ENCODE measurements at regions of chr4 and their contacts with region 1.

Region 1: DNA sequence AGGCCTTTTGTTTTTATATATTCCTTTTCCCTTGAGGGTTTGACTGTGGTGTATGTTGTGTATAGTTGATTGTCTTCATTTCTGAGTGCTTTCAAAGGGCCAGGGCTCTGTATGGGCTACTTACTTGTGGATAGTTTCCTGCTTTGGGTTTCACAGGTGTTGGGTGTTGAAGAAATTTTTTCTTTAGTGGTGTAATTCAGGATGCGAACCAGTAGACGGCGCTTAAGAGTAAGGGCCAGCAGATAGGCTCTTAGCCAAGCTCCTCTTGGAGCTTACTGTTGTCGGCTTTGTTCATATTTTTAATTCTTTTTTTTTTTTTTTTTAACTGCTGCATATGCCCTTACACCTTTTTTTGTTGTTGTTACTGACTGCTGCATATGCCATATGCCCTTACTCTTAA is 276.3 kb upstream of the GALNT7 start:
- DNase-seq: peak; percentile 40
- H3K4me3 ChIP-seq: no peak overlapping the region
- H3K27ac ChIP-seq: no peak overlapping the region
- H3K4me1 ChIP-seq: no peaks in the 10 kb centered on the region
- H3K27me3 ChIP-seq: no peaks in the 10 kb centered on the region
- CTCF ChIP-seq: peak; percentile 51 to 72
- POLR2A ChIP-seq: no peak

Region 2: GRCh38 chr4:172142281-172142738 is 750.0 kb before region 1 on chr4:
- CTCF ChIA-PET with region 1: no interaction called
- POLR2A ChIA-PET with region 1: no interaction called
- dilution Hi-C with region 1: no loop called
- intact Hi-C with region 1: no loop called
- DNase-seq: peak; percentile 4
- H3K4me3 ChIP-seq: no peak overlapping the region
- H3K27ac ChIP-seq: no peak overlapping the region
- H3K4me1 ChIP-seq: no peaks in the 10 kb centered on the region
- H3K27me3 ChIP-seq: no peaks in the 10 kb centered on the region
- CTCF ChIP-seq: no peak
- POLR2A ChIP-seq: no peak

Region 3: DNA sequence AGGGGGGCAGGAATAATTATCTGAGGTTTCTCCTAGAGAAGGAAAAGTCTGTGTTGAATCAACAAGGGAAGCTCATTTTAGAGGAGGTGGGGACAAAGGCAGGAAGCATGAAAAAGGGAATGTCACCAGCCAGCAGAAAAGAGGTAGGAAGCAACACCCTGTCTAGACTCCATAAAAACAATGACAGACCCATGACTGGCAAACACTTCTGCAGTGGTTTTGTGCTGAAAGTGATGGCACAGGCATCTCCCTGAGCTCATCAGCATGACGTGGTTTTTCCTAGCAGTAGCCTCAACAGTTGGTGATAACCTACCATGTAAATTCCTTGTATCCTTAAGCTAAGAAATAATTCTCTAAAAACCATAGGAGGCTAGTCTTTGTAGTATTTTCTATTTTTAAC is 165.6 kb after region 1 on chr4:
- CTCF ChIA-PET with region 1: no interaction called
- POLR2A ChIA-PET with region 1: no interaction called
- dilution Hi-C with region 1: no loop called
- intact Hi-C with region 1: no loop called
- DNase-seq: peak; percentile 74
- H3K4me3 ChIP-seq: no peak overlapping the region
- H3K27ac ChIP-seq: peak overlapping the region; percentile 74
- H3K4me1 ChIP-seq: peaks cover 28% of the 10 kb centered on the region
- H3K27me3 ChIP-seq: no peaks in the 10 kb centered on the region
- CTCF ChIP-seq: no peak
- POLR2A ChIP-seq: no peak

Region 4: DNA sequence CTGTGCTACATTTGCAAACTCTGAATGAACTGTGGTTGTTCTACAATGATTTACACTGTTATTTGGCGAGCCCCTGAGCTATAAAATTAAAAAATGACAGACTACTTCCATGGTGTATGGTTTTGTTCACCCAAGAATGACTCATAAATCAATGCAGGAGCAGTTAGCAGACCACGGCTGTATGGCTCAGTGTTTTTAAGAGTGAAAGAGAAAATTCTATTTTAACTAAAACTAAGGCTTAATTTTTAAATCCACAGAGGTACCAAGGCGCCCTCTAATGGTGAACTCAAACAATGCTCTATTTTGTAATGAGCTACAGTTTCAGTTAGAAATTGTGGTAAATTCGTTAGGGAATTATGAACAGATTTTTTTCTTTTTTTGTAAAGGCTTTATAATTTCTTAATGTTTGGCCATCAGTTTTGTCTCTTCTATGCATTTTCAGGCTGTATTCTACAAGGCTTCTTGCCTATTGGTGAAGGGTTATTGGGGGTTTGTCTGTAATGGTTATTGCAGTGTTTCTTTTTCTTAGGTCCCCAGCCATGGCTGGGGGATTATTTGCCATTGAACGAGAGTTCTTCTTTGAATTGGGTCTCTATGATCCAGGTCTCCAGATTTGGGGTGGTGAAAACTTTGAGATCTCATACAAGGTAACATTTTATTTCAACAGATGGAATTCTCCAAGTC is 409.4 kb after region 1 on chr4:
- CTCF ChIA-PET with region 1: interaction called, 6 read pairs
- POLR2A ChIA-PET with region 1: no interaction called
- dilution Hi-C with region 1: no loop called
- intact Hi-C with region 1: loop called (anchors 1 kb)
- DNase-seq: peak; percentile 38
- H3K4me3 ChIP-seq: no peak overlapping the region
- H3K27ac ChIP-seq: no peak overlapping the region
- H3K4me1 ChIP-seq: no peaks in the 10 kb centered on the region
- H3K27me3 ChIP-seq: no peaks in the 10 kb centered on the region
- CTCF ChIP-seq: peak; percentile 52 to 53
- POLR2A ChIP-seq: no peak

Region 5: GRCh38 chr4:174467107-174467506 is 1574.8 kb after region 1 on chr4:
- CTCF ChIA-PET with region 1: no interaction called
- POLR2A ChIA-PET with region 1: no interaction called
- dilution Hi-C with region 1: no loop called
- intact Hi-C with region 1: no loop called
- DNase-seq: no peak
- H3K4me3 ChIP-seq: no peak overlapping the region
- H3K27ac ChIP-seq: no peak overlapping the region
- H3K4me1 ChIP-seq: no peaks in the 10 kb centered on the region
- H3K27me3 ChIP-seq: no peaks in the 10 kb centered on the region
- CTCF ChIP-seq: no peak
- POLR2A ChIP-seq: no peak